ENCODE measurements at regions of chr17 and their contacts with region 1.

Region 1: DNA sequence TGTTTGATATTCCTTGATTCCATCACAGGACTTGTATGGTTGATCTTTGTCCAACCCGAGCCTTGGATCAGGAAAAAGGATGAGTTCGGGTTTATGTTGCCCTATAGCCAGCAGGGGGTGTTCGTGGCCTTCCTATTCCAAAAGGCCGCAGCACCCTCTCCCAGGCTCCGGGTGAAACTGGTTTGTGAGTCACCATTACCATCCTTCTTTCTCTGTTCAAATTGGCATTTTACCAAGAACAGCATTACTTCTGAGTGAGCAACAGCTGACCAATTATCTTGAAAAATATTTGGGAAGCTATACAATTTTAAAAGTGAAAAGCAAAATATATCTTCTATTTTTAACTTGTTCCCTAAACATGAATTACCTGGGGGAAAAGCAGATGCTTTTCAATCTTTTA is 24.3 kb upstream of the KRT20 start:
- DNase-seq: peak; percentile 40 to 69
- ATAC-seq: peak; percentile 78 to 96 (median 86)
- H3K4me3 ChIP-seq: no peak overlapping the region
- H3K27ac ChIP-seq: no peak overlapping the region
- H3K4me1 ChIP-seq: peaks cover 0 to 33% (median 0%) of the 10 kb centered on the region in 9 donors
- H3K27me3 ChIP-seq: peaks cover 0 to 26% (median 22%) of the 10 kb centered on the region in 7 donors
- CTCF ChIP-seq: peak; percentile 41 to 85 (median 79)

Region 2: DNA sequence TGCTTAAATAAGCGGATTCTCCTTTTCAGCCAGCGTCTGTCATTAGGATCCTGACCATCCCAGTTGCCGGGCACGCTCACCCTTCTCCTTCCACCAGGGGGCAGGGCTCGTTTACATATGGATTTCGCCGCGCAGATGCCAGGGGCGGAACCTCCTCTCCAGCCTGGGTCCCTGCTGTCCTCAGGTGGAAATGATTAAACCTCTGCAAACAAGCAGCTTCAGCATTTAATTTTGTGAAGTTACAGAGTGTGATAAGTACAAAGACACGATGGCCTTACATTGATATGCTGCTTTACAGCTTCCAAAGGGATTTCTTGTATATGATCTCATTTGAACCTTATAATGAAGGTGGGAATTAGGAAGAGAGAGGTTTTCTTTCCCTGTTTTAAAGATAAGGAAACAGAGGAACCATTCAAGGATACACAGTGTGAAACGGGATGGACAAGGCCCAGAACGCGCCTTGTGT is 105.7 kb before region 1 on chr17:
- intact Hi-C with region 1: loop called in 1 of 10 experiments (anchors 10 kb)
- DNase-seq: peak; percentile 71 to 74
- ATAC-seq: peak in 7 of 8 donors; percentile 67 to 94 (median 82)
- H3K4me3 ChIP-seq: no peak overlapping the region
- H3K27ac ChIP-seq: no peak overlapping the region
- H3K4me1 ChIP-seq: peaks cover 0 to 8% (median 3%) of the 10 kb centered on the region in 9 donors
- H3K27me3 ChIP-seq: peaks cover 0 to 78% (median 20%) of the 10 kb centered on the region in 7 donors
- CTCF ChIP-seq: peak; percentile 49 to 92 (median 83)

Region 3: DNA sequence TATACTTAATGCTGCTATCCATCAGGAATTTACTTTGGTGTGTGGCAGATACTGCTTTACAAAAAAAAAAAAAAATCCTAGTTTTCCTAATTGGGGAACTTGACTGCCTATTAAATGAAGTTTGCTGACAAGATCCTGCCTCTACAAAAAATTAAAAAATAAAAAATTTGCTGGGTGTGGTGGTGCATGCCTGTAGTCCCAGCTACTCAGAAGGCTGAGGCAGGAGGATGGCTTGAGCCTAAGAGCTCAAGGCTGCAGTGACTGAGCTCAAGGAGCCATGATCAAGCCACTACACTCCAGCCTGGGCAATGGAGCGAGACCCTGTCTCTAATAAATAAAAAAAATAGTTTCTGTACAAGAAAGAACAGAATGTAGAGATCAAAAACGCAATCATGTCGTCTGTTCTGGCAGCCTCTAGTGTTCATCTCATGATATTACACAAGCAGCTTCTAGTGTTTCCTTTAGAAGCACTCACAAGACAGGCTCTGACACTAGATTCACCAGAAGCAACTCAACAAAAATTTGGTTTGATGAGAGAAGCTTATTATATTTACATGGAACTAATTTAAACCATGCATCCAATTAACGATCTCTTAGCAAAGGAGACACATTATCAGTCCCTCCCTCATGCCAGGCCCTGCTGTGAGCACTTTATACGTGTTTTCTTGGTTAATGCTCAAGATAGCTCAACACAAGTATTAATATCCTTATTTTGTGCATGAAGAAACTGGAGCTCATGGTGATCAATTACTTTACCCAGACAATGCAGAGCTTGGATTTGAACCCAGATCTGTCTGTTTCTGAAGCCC is 412.9 kb after region 1 on chr17:
- intact Hi-C with region 1: loop called in 8 of 10 experiments (anchors 2 to 10 kb)
- DNase-seq: no peak
- ATAC-seq: peak in 1 of 8 donors; percentile 37
- H3K4me3 ChIP-seq: no peak overlapping the region
- H3K27ac ChIP-seq: no peak overlapping the region
- H3K4me1 ChIP-seq: no peaks in the 10 kb centered on the region
- H3K27me3 ChIP-seq: no peaks in the 10 kb centered on the region
- CTCF ChIP-seq: peak; percentile 30 to 82 (median 64)

Region 4: GRCh38 chr17:41496820-41497408 is 587.6 kb after region 1 on chr17:
- intact Hi-C with region 1: loop called in 1 of 10 experiments (anchors 5 kb)
- DNase-seq: peak; percentile 48 to 61
- ATAC-seq: peak; percentile 67 to 90 (median 82)
- H3K4me3 ChIP-seq: no peak overlapping the region
- H3K27ac ChIP-seq: peak overlapping the region in 1 of 10 donors; percentile 89
- H3K4me1 ChIP-seq: peaks cover 0 to 57% (median 0%) of the 10 kb centered on the region in 9 donors
- H3K27me3 ChIP-seq: peaks cover 0 to 32% (median 16%) of the 10 kb centered on the region in 7 donors
- CTCF ChIP-seq: peak; percentile 28 to 84 (median 61)

Region 5: GRCh38 chr17:41648411-41649195 is 739.3 kb after region 1 on chr17:
- intact Hi-C with region 1: loop called (anchors 5 to 10 kb)
- DNase-seq: peak; percentile 84 to 90
- ATAC-seq: peak; percentile 91 to 98 (median 96)
- H3K4me3 ChIP-seq: peak overlapping the region in 9 of 10 donors; percentile 14 to 52 (median 43)
- H3K27ac ChIP-seq: peak overlapping the region in 4 of 10 donors; percentile 11 to 40 (median 24)
- H3K4me1 ChIP-seq: peaks cover 0 to 30% (median 11%) of the 10 kb centered on the region in 9 donors
- H3K27me3 ChIP-seq: peaks cover 0 to 7% (median 0%) of the 10 kb centered on the region in 7 donors
- CTCF ChIP-seq: peak; percentile 90 to 98 (median 94)

Measured in heart right ventricle (tissue), 16 donors.